SK-N-SH (cell line): ENCODE measurements at regions of chr1 and their contacts with region 1.

Region 1: DNA sequence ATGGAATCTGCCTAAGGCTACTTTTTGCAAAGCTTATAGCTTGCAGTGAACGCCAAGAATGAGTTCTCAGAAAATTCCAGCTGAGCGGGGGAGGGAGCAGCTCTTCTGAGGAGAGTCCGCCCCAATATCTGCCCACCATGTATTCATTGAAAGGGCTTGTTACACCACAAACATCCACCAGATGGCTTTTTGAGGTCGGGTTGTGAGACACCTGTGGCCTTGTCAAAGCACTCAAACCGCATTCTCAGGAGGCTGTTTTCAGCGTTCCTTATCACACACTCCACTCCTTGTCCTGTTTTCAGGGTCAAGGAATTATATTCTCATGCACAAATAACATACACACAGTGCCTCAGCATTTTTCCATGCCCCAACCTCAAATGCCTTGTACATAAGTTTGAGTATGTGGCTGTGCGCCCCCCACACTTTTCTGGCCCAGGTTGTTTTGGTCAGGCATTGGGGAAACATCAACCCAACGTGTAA is 3.9 kb upstream of the C4BPB start:
- DNase-seq: peak; percentile 45
- H3K4me3 ChIP-seq: no peak overlapping the region; a peak in 1 of 4 replicates
- H3K27ac ChIP-seq: no peak overlapping the region
- H3K4me1 ChIP-seq: no peaks in the 10 kb centered on the region
- H3K27me3 ChIP-seq: peaks cover 7% of the 10 kb centered on the region; the same call in 1 of the 2 replicates
- CTCF ChIP-seq: peak; percentile 70
- EP300 ChIP-seq: no peak
- RAD21 ChIP-seq: peak; percentile 58

Region 2: DNA sequence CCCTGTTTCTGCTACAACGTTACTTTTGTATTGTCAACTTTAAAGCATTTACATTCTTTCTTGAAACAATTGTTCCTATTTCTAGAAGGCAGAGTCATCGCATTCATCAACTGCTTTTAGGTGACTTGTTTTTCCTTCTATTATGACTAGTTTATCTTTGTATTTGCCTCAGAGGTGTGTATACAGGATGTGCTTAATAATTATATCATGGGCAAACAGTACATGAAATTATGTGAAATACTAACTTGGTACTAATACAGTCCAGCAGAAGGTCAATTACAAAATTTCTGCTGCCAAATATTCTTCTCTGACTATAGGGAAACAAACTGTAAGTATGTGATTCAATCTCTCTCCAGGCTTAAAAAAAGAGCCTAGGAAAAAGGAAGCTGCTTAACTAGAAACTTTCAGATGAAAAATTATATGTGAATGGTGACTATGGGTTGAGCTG is 120.9 kb after region 1 on chr1:
- CTCF ChIA-PET with region 1: no interaction called
- POLR2A ChIA-PET with region 1: no interaction called
- DNase-seq: no peak
- H3K4me3 ChIP-seq: no peak overlapping the region
- H3K27ac ChIP-seq: peak overlapping the region; percentile 68 to 81
- H3K4me1 ChIP-seq: no peaks in the 10 kb centered on the region; a peak in 1 of 4 replicates
- H3K27me3 ChIP-seq: no peaks in the 10 kb centered on the region
- CTCF ChIP-seq: no peak
- EP300 ChIP-seq: no peak
- RAD21 ChIP-seq: no peak

Region 3: DNA sequence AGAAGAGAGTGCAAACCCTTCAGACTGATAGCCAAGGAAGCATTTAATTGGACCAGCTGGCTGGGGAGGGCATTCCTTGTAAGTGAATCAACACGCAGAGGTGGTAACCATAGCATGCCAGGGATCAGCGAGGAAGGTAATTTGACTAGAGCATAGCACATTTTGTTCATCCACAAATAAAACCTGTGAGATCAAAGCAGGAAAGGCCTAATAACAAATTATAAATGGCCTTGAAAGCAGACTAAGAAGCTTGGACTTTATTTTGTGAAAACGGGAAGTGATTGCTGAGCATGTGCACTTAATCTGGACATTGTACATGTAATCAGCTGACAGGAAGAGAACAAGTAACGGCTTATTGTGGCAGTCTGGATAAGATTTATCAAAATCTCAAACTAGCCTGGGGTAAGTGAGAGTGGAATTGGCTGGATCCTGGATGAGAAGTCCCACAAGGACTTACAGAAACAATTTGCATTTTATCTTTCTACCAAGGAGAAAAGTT is 225.1 kb after region 1 on chr1:
- CTCF ChIA-PET with region 1: no interaction called
- POLR2A ChIA-PET with region 1: no interaction called
- DNase-seq: no peak
- H3K4me3 ChIP-seq: no peak overlapping the region
- H3K27ac ChIP-seq: peak overlapping the region; percentile 40 to 90
- H3K4me1 ChIP-seq: peaks cover 5 to 7% of the 10 kb centered on the region in 2 experiments; a peak in 2 of 4 replicates
- H3K27me3 ChIP-seq: peaks cover 13% of the 10 kb centered on the region; the same call in 1 of the 2 replicates
- CTCF ChIP-seq: no peak
- EP300 ChIP-seq: no peak
- RAD21 ChIP-seq: no peak

Region 4: DNA sequence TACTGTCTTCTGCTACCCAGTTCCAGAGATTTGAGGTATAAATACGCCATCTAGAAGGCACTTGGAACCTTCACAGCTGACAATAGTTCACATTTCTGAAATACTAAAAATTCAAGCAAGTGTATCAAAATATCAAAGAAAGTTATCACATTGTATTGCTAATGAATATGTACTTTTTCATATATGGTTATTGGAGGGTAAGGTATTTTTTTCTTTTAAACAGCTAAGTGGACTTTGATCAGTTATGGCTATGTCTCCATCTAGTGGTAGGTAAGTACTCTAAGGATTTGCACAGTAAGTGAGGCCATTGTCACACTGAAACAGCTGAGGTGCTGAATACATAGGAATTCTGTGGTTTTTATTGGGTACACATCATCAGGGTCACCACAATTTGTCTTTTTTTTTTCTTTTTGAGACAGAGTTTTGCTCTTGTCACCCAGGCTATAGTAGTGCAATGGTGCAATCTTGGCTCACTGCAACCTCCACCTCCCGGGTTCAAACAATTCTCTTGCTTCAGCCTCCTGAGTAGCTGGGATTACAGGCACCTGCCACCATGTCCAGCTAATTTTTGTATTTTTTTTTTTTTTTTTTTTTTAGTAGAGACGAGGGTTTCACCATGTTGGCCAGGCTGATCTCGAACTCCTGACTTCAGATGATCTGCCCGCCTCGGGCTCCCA is 320.2 kb after region 1 on chr1:
- CTCF ChIA-PET with region 1: interaction called, 30 read pairs
- POLR2A ChIA-PET with region 1: no interaction called
- DNase-seq: peak; percentile 52
- H3K4me3 ChIP-seq: no peak overlapping the region; a peak in 1 of 4 replicates
- H3K27ac ChIP-seq: no peak overlapping the region
- H3K4me1 ChIP-seq: no peaks in the 10 kb centered on the region
- H3K27me3 ChIP-seq: peaks cover 32% of the 10 kb centered on the region; the same call in 1 of the 2 replicates
- CTCF ChIP-seq: peak; percentile 93
- EP300 ChIP-seq: no peak
- RAD21 ChIP-seq: peak; percentile 76

Region 5: DNA sequence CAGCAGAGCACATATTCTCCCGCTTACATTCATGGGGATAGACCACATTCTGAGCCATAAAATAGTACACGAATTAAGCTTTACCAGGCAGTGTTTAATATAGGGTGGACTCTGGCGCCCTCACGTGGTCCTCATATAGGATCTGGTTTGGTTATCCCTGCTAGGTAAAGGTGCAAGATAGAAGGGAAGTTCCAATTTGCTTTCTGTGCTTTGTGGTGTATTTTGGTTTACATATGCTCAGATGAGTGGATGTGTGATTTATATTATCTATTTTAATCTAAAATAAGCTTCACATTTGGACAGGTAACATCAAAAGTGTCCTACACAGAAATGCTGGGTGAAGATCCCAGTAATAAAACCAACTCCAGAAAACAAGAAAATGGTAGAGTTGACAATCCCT is 414.8 kb after region 1 on chr1:
- CTCF ChIA-PET with region 1: interaction called, 18 read pairs
- POLR2A ChIA-PET with region 1: no interaction called
- DNase-seq: peak; percentile 62
- H3K4me3 ChIP-seq: no peak overlapping the region
- H3K27ac ChIP-seq: no peak overlapping the region
- H3K4me1 ChIP-seq: no peaks in the 10 kb centered on the region
- H3K27me3 ChIP-seq: peaks cover 36% of the 10 kb centered on the region
- CTCF ChIP-seq: peak; percentile 77
- EP300 ChIP-seq: no peak
- RAD21 ChIP-seq: peak; percentile 85